AG04449 (cell line): ENCODE measurements at regions of chr16 and their contacts with region 1.

Region 1: GRCh38 chr16:85086347-85087291 is 25.7 kb downstream of the CIBAR2 start:
- DNase-seq: no peak
- H3K4me3 ChIP-seq: no peak overlapping the region
- CTCF ChIP-seq: peak; percentile 56

Region 2: GRCh38 chr16:84925092-84925772 is 161.4 kb before region 1 on chr16:
- CTCF ChIA-PET with region 1: interaction called, 13 read pairs
- POLR2A ChIA-PET with region 1: no interaction called
- DNase-seq: no peak
- H3K4me3 ChIP-seq: no peak overlapping the region
- CTCF ChIP-seq: peak; percentile 72

Region 3: GRCh38 chr16:84937196-84938005 is 149.2 kb before region 1 on chr16:
- CTCF ChIA-PET with region 1: no interaction called
- POLR2A ChIA-PET with region 1: no interaction called
- DNase-seq: no peak
- H3K4me3 ChIP-seq: no peak overlapping the region
- CTCF ChIP-seq: no peak

Region 4: DNA sequence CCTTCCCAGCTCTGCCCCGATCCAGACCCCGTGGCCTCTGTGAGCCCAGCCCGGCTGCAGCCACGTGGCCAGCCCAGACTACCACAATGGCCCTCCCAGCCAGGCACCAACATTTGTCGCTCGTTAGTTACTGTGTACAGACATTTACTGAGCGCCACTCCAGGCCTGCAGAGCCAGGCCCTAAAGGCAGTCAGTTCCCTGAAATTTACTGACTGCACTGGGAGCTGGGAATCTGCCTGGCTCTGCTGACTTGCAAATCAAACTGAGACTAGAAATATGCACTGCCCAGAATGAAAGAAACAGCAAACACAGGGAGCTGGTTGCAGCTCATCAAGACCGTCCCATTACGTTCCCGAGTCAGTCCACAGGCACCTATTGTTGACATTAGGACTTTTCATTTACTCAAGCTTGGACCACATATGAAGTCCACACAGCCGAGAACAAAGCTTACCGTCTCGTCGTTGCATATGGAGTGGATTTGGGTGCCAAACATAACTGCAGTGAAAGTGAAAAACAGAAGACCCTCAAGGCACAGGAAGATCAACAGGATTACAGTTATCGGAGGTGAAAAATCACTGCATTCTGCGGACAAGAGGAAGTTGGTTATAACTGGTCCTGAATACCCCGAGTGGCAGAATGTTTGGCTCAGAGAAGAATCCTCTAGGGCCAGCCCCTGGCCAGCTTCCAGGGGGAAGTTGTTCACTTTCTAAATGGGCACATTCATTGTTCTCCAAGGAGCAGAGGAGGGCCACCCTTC is 109.8 kb before region 1 on chr16:
- CTCF ChIA-PET with region 1: interaction called, 20 read pairs
- POLR2A ChIA-PET with region 1: no interaction called
- DNase-seq: no peak
- H3K4me3 ChIP-seq: no peak overlapping the region
- CTCF ChIP-seq: no peak

Region 5: GRCh38 chr16:85055503-85056210 is 31.0 kb before region 1 on chr16:
- CTCF ChIA-PET with region 1: interaction called, 10 read pairs
- POLR2A ChIA-PET with region 1: no interaction called
- DNase-seq: no peak
- H3K4me3 ChIP-seq: peak overlapping the region; percentile 43
- CTCF ChIP-seq: no peak

Region 6: GRCh38 chr16:85061566-85061965 is 25.1 kb before region 1 on chr16:
- CTCF ChIA-PET with region 1: interaction called, 10 read pairs
- POLR2A ChIA-PET with region 1: no interaction called
- DNase-seq: no peak
- H3K4me3 ChIP-seq: no peak overlapping the region
- CTCF ChIP-seq: no peak